H1 (cell line): ENCODE measurements at regions of chr16 and their contacts with region 1.

Region 1: DNA sequence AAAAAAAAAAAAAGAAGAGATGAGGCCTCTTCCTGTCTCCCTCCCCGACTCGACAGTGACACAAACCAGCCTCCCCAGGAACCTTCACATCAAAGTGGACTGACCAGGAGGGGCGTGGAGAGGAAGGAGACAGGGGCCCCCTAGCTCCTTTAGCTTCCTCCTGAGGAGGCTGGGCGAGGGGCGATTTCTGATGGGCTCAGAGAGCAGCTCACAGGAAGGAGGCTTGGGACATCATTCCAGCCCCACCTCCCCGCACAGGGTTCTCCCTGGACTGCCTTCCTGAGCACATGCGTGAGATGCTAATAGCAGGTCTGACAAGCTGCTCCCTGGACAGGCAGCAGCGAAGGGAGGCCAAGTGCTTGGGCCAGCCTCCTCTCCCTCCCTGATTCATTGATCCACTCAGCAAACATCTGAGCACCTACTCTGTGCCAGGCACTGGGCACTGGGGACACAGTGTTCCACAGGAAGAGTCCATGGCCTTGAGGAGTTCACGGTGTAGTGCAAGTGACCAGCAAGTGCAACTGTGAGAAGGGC is 14.4 kb upstream of the DOK4 start:
- DNase-seq: no peak
- H3K4me3 ChIP-seq: no peak overlapping the region
- H3K27ac ChIP-seq: no peak overlapping the region
- H3K4me1 ChIP-seq: peaks cover 0 to 5% (median 0%) of the 10 kb centered on the region in 4 experiments; a peak in 3 of 7 replicates
- H3K27me3 ChIP-seq: no peaks in the 10 kb centered on the region
- CTCF ChIP-seq: no peak
- EP300 ChIP-seq: no peak
- POLR2A ChIP-seq: no peak
- RAD21 ChIP-seq: no peak

Region 2: GRCh38 chr16:57485916-57486857 is 14.5 kb before region 1 on chr16 and contains the start of gene DOK4:
- CTCF ChIA-PET with region 1: interaction called, 11 read pairs
- POLR2A ChIA-PET with region 1: interaction called, 3 read pairs
- DNase-seq: peak in 1 of 2 experiments; percentile 91
- H3K4me3 ChIP-seq: peak within 1 kb of the TSS; percentile 53 to 79 (median 72)
- H3K27ac ChIP-seq: no peak within 1 kb of the TSS
- H3K4me1 ChIP-seq: peaks cover 0 to 14% (median 10%) of the 10 kb centered on the region in 4 experiments; a peak in 6 of 7 replicates
- H3K27me3 ChIP-seq: peaks cover 0 to 12% (median 4%) of the 10 kb centered on the region in 4 experiments; a peak in 4 of 7 replicates
- CTCF ChIP-seq: no peak
- EP300 ChIP-seq: no peak
- POLR2A ChIP-seq: no peak
- RAD21 ChIP-seq: no peak
- total RNA-seq, gene DOK4: 28.9 and 29.9 TPM in 2 replicates